ENCODE measurements at regions of chr7 and their contacts with region 1.

Region 1: DNA sequence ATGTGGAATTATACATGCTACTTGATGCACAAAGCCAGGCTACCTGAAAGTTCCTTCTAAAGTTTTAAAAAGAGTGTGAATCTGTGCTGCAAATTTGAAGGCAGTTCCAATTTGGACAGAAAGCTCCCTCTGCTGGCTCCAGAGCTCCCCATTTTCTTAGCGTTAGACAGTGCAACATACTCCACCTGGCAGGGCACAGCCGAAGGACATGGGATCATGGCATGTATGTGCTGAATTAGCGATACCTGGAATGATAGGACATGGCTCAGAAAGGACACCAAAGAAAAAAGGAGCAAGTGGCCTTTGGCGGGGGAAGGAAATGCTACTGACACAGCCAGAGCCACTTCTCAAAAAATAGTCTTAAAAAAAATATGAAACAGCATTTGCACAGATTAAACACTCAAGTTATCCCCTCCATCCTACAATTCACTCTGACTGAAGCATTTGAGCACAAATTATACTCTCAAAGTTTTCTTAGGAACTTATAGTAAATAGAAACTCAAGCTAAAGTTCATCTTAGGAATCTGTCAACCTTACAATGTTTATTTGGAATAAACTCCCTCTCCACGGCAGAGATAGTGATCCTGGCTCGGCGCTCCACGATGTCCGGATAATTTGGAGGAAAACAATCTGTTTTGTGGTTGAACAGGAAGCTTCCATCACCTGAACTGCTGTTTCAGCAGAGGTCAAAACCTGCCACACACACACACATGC is 80.0 kb downstream of the C7orf25 start:
- DNase-seq: peak; percentile 60
- H3K4me3 ChIP-seq: no peak overlapping the region
- H3K27ac ChIP-seq: no peak overlapping the region
- H3K4me1 ChIP-seq: no peaks in the 10 kb centered on the region
- H3K27me3 ChIP-seq: no peaks in the 10 kb centered on the region
- CTCF ChIP-seq: peak; percentile 73

Region 2: DNA sequence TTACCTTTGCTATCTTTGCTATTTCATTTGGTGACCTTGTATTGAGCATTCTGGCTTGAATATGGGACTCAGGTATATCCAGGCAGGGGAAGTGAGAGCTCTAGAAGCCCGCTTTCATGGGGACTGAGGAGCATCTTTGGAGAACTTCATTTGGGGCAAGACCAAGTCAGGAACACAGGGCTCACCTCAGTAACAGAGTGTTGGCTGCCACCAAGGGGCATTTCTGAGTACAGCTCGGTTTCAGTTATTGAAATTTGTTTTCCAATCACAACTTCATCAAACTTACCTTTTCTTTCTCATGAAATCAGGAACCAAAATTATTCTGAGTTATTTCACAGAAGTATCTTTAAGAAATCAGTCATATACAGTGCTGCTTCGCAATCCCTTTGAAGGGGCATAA is 257.2 kb before region 1 on chr7:
- CTCF ChIA-PET with region 1: no interaction called
- POLR2A ChIA-PET with region 1: no interaction called
- intact Hi-C with region 1: loop called (anchors 10 kb)
- DNase-seq: peak; percentile 25
- H3K4me3 ChIP-seq: no peak overlapping the region
- H3K27ac ChIP-seq: no peak overlapping the region
- H3K4me1 ChIP-seq: peaks cover 8% of the 10 kb centered on the region
- H3K27me3 ChIP-seq: no peaks in the 10 kb centered on the region
- CTCF ChIP-seq: peak; percentile 59

Measured in A673 (cell line).